CD4-positive, alpha-beta T cell (primary cell): ENCODE measurements at regions of chr2 and their contacts with region 1.

Region 1: GRCh38 chr2:210046851-210047500 is 44.5 kb downstream of the RPE start:
- DNase-seq: no peak
- ATAC-seq: no peak
- H3K4me3 ChIP-seq: no peak overlapping the region
- H3K4me3 Mint-ChIP-seq: no peak overlapping the region
- H3K27ac ChIP-seq: no peak overlapping the region
- H3K27ac Mint-ChIP-seq: no peak overlapping the region
- H3K4me1 ChIP-seq: no peaks in the 10 kb centered on the region
- H3K4me1 Mint-ChIP-seq: no peaks in the 10 kb centered on the region
- H3K27me3 ChIP-seq: no peaks in the 10 kb centered on the region
- H3K27me3 Mint-ChIP-seq: no peaks in the 10 kb centered on the region
- CTCF ChIP-seq: no peak

Region 2: DNA sequence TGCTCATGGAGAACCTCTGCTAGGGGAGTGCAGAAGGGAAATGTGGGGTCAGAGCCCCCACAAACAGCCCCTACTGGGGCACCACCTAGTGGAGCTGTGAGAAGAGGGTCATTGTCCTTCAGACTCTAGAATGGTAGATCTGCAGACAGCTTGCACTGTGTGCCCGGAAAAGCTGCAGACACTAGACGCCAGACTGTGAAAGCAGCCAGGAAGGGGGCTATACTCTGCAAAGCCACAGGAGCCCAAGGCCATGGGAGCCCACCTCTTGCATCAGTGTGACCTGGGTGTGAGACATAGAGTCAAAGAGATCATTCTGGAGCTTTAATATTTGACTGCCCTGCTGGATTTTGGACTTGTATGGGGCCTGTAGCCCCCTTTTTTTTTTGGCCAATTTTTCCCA is 16.3 kb after region 1 on chr2:
- CTCF ChIA-PET with region 1: no interaction called
- POLR2A ChIA-PET with region 1: no interaction called
- intact Hi-C with region 1: no loop called
- DNase-seq: no peak
- ATAC-seq: no peak
- H3K4me3 ChIP-seq: no peak overlapping the region
- H3K4me3 Mint-ChIP-seq: no peak overlapping the region
- H3K27ac ChIP-seq: no peak overlapping the region
- H3K27ac Mint-ChIP-seq: no peak overlapping the region
- H3K4me1 ChIP-seq: no peaks in the 10 kb centered on the region
- H3K4me1 Mint-ChIP-seq: no peaks in the 10 kb centered on the region
- H3K27me3 ChIP-seq: no peaks in the 10 kb centered on the region
- H3K27me3 Mint-ChIP-seq: no peaks in the 10 kb centered on the region
- CTCF ChIP-seq: no peak

Region 3: DNA sequence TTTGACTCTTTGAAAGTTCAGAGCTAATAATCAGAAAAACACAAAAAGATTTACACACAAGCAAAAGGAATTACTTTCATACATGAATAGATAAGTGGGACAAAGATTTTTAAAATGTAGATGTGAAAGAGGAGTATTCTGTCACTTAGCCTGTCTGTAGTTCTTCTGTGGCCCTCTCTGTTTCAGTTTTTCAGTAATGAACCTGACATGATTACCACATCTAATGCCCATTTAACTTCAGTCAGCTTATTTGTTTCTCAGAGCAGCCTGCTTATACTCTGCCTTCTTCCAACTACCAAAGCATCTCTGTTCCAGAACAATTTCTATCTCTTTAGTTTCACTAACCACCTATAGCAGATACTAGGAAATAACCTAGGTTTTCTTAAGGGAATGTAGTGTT is 212.7 kb after region 1 on chr2:
- CTCF ChIA-PET with region 1: no interaction called
- POLR2A ChIA-PET with region 1: no interaction called
- intact Hi-C with region 1: loop called in 1 of 2 experiments (anchors 5 kb)
- DNase-seq: no peak
- ATAC-seq: no peak
- H3K4me3 ChIP-seq: no peak overlapping the region
- H3K4me3 Mint-ChIP-seq: no peak overlapping the region
- H3K27ac ChIP-seq: no peak overlapping the region
- H3K27ac Mint-ChIP-seq: no peak overlapping the region
- H3K4me1 ChIP-seq: no peaks in the 10 kb centered on the region
- H3K4me1 Mint-ChIP-seq: no peaks in the 10 kb centered on the region
- H3K27me3 ChIP-seq: no peaks in the 10 kb centered on the region
- H3K27me3 Mint-ChIP-seq: peaks cover 5% of the 10 kb centered on the region
- CTCF ChIP-seq: no peak